CD4-positive, alpha-beta T cell (primary cell): ENCODE measurements at regions of chr17 and their contacts with region 1.

Region 1: GRCh38 chr17:45247429-45248131 is 14.3 kb downstream of the SPATA32 start:
- DNase-seq: peak; percentile 88 to 99 (median 96)
- ATAC-seq: peak; percentile 74
- H3K4me3 ChIP-seq: peak overlapping the region; percentile 75
- H3K4me3 Mint-ChIP-seq: peak overlapping the region; percentile 93
- H3K27ac ChIP-seq: peak overlapping the region; percentile 90 to 96
- H3K27ac Mint-ChIP-seq: peak overlapping the region; percentile 100
- H3K4me1 ChIP-seq: peaks cover 87% of the 10 kb centered on the region
- H3K4me1 Mint-ChIP-seq: peaks cover 68% of the 10 kb centered on the region
- H3K27me3 ChIP-seq: no peaks in the 10 kb centered on the region
- H3K27me3 Mint-ChIP-seq: no peaks in the 10 kb centered on the region
- CTCF ChIP-seq: no peak

Region 2: DNA sequence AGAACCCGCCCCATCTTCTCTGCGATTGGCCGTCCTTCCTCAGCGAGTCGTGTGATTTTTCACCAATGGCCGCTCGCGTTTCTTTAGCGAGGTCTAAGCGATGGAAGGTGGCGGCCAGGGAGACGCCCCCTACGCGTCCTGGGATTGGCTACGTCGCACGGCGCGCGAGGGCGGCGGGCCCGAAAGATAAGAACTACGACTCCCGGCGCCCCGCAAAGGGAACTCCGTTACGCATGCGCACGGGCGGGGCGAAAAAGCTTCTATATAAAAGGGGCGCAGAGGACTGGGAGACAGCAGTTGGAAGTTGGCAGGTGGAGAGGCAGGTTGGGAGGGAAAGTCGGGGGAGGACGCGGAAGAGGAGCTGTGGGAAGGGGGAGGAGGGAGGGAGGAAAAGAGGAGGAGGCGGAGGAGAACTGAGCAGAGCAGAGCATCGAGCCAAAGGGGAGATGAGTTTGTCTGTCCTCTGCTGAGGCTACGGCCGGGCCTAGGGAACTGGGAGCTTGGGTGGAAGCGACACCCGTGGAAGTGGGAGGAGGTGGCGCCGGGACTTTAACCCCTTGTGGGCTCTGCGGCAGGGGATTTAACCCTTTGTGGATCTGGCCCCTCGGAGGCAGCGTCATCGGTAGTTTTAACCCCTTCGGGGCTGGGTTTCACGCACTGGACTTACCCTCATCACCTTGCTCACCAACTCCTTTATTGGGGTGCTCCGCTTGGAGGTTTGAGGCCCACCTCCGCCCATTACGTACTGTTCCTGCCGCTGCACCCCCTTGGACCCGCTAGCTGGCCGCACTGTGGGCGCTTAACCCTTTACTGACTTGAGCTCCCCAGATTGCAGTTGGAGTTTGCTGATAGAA is 99.2 kb before region 1 on chr17 and contains the start of gene HEXIM1:
- CTCF ChIA-PET with region 1: interaction called, 3 read pairs
- POLR2A ChIA-PET with region 1: interaction called, 44 read pairs
- intact Hi-C with region 1: no loop called
- DNase-seq: peak; percentile 98 to 100 (median 99)
- ATAC-seq: peak; percentile 78
- H3K4me3 ChIP-seq: peak within 1 kb of the TSS; percentile 94
- H3K4me3 Mint-ChIP-seq: peak within 1 kb of the TSS; percentile 94
- H3K27ac ChIP-seq: peak within 1 kb of the TSS; percentile 93 to 97
- H3K27ac Mint-ChIP-seq: peak within 1 kb of the TSS; percentile 99
- H3K4me1 ChIP-seq: peaks cover 71% of the 10 kb centered on the region
- H3K4me1 Mint-ChIP-seq: peaks cover 69% of the 10 kb centered on the region
- H3K27me3 ChIP-seq: no peaks in the 10 kb centered on the region
- H3K27me3 Mint-ChIP-seq: peaks cover 8% of the 10 kb centered on the region
- CTCF ChIP-seq: no peak
- total RNA-seq, gene HEXIM1: 50.5 to 50.9 TPM

Region 3: DNA sequence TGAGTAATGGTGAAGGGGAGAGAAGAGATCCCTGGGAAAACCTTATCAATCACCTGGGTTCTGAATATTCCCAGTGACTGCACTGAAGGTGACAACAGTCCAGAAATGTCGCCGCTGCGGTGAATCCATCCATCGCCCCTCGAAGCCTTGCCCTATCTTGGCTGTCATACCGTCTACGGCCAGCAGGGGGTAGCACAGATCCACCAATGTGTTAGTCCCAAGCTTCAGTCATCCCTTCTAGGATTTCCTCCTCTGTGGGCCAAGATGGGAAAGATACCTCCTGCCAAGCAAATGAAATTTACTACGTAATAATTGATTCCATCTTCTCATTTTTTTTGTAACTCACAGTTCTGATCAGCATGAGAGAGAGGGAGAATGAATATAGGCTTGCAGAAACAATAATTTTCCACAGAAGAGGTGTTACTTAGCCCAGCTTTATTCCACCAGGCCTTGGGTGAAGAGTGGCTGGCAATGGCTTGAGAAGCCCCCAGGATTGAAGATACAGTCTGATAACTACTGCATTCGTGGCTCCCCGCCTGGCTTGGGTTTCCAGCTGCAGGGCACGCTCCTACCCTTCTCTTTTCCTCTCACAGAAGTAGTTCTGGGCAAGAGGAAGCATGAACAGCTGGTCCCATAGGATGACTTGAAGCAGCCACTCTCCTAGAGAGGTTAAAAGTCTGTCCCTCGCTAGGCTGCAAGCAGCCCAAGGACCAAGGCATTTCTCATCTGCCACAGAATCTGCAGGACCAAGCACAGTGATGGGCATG is 28.5 kb before region 1 on chr17:
- CTCF ChIA-PET with region 1: interaction called, 16 read pairs
- POLR2A ChIA-PET with region 1: interaction called, 346 read pairs
- intact Hi-C with region 1: no loop called
- DNase-seq: peak; percentile 74 to 94 (median 86)
- ATAC-seq: peak; percentile 43
- H3K4me3 ChIP-seq: peak overlapping the region; percentile 4
- H3K4me3 Mint-ChIP-seq: peak overlapping the region; percentile 91
- H3K27ac ChIP-seq: peak overlapping the region in 1 of 2 donors; percentile 17
- H3K27ac Mint-ChIP-seq: peak overlapping the region; percentile 76
- H3K4me1 ChIP-seq: peaks cover 38% of the 10 kb centered on the region
- H3K4me1 Mint-ChIP-seq: peaks cover 36% of the 10 kb centered on the region
- H3K27me3 ChIP-seq: no peaks in the 10 kb centered on the region
- H3K27me3 Mint-ChIP-seq: no peaks in the 10 kb centered on the region
- CTCF ChIP-seq: peak; percentile 99

Region 4: GRCh38 chr17:45235416-45236281 is 11.9 kb before region 1 on chr17:
- CTCF ChIA-PET with region 1: interaction called, 6 read pairs
- POLR2A ChIA-PET with region 1: interaction called, 346 read pairs
- intact Hi-C with region 1: no loop called
- DNase-seq: peak; percentile 70 to 92 (median 78)
- ATAC-seq: peak; percentile 63
- H3K4me3 ChIP-seq: no peak overlapping the region
- H3K4me3 Mint-ChIP-seq: peak overlapping the region; percentile 39
- H3K27ac ChIP-seq: peak overlapping the region; percentile 41 to 44
- H3K27ac Mint-ChIP-seq: peak overlapping the region; percentile 100
- H3K4me1 ChIP-seq: peaks cover 76% of the 10 kb centered on the region
- H3K4me1 Mint-ChIP-seq: peaks cover 65% of the 10 kb centered on the region
- H3K27me3 ChIP-seq: no peaks in the 10 kb centered on the region
- H3K27me3 Mint-ChIP-seq: no peaks in the 10 kb centered on the region
- CTCF ChIP-seq: peak; percentile 93

Region 5: GRCh38 chr17:45270828-45271418 is 23.3 kb after region 1 on chr17:
- CTCF ChIA-PET with region 1: interaction called, 3 read pairs
- POLR2A ChIA-PET with region 1: interaction called, 6 read pairs
- intact Hi-C with region 1: loop called in 1 of 2 experiments (anchors 2 kb)
- DNase-seq: peak; percentile 27 to 74 (median 51)
- ATAC-seq: peak; percentile 85
- H3K4me3 ChIP-seq: no peak overlapping the region
- H3K4me3 Mint-ChIP-seq: no peak overlapping the region
- H3K27ac ChIP-seq: no peak overlapping the region
- H3K27ac Mint-ChIP-seq: no peak overlapping the region
- H3K4me1 ChIP-seq: peaks cover 6% of the 10 kb centered on the region
- H3K4me1 Mint-ChIP-seq: no peaks in the 10 kb centered on the region
- H3K27me3 ChIP-seq: no peaks in the 10 kb centered on the region
- H3K27me3 Mint-ChIP-seq: no peaks in the 10 kb centered on the region
- CTCF ChIP-seq: peak; percentile 71

Region 6: GRCh38 chr17:45307290-45308015 is 59.9 kb after region 1 on chr17:
- CTCF ChIA-PET with region 1: interaction called, 3 read pairs
- POLR2A ChIA-PET with region 1: interaction called, 16 read pairs
- intact Hi-C with region 1: no loop called
- DNase-seq: peak in 6 of 14 experiments; percentile 18 to 66 (median 42)
- ATAC-seq: peak; percentile 72
- H3K4me3 ChIP-seq: no peak overlapping the region
- H3K4me3 Mint-ChIP-seq: peak overlapping the region; percentile 66
- H3K27ac ChIP-seq: peak overlapping the region; percentile 26 to 38
- H3K27ac Mint-ChIP-seq: peak overlapping the region; percentile 82
- H3K4me1 ChIP-seq: peaks cover 85% of the 10 kb centered on the region
- H3K4me1 Mint-ChIP-seq: peaks cover 83% of the 10 kb centered on the region
- H3K27me3 ChIP-seq: no peaks in the 10 kb centered on the region
- H3K27me3 Mint-ChIP-seq: no peaks in the 10 kb centered on the region
- CTCF ChIP-seq: no peak

Region 7: DNA sequence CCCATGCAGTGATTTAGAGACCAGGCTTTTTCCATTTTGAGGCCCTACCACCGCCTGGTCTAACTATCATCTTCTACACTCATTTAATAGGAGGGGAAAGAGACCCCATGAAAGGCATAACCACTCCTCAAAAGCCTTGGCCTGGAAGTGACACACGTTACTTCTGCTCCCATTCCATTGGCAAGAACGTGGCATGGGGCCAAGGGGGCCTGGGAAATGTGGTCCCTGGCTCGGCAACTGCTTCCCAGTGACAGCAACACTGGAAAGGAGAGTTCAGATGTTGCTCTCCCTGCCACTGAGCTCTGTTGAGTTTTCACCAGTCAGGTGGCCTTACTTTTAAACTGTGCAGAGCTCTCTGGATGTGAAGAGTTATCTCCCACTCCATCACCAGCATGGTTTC is 114.4 kb after region 1 on chr17:
- CTCF ChIA-PET with region 1: no interaction called
- POLR2A ChIA-PET with region 1: no interaction called
- intact Hi-C with region 1: no loop called
- DNase-seq: peak in 1 of 14 experiments; percentile 22
- ATAC-seq: no peak
- H3K4me3 ChIP-seq: no peak overlapping the region
- H3K4me3 Mint-ChIP-seq: no peak overlapping the region
- H3K27ac ChIP-seq: no peak overlapping the region
- H3K27ac Mint-ChIP-seq: no peak overlapping the region
- H3K4me1 ChIP-seq: no peaks in the 10 kb centered on the region
- H3K4me1 Mint-ChIP-seq: no peaks in the 10 kb centered on the region
- H3K27me3 ChIP-seq: peaks cover 3 to 6% of the 10 kb centered on the region in 2 experiments
- H3K27me3 Mint-ChIP-seq: peaks cover 29% of the 10 kb centered on the region
- CTCF ChIP-seq: no peak

Region 8: DNA sequence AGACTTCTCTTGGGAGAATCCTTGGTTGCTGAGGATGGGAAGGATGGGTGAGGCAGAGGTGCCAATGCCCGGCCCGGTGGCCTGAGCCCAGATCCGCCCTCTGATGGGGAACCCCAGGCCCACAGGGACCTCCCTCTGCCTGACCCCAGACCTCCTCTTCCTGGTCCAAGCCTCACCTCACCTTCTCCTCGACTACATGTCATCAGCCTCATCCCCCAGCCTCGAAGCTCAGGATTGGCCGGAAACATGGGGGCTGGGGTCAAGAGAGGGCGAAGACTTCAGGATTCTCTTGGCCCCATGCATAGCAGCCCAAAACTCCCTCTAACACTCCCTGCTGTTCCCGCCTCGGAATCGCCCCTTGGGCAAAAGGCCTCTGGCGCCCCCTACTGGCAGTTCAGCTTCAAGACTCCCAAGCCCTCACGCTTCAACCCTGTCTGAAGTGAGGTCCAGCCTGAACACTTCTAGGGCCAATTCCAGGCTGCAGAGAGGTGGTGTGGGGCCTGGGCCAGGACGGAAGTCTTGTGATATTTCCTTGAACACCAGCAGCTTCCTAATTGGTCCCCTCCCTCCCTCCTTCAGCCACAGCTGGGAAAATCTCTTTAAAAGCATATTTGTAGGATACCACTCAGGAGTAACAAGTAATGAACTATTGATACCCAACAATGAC is 137.9 kb after region 1 on chr17:
- CTCF ChIA-PET with region 1: interaction called, 11 read pairs
- POLR2A ChIA-PET with region 1: interaction called, 9 read pairs
- intact Hi-C with region 1: no loop called
- DNase-seq: peak; percentile 77 to 97 (median 88)
- ATAC-seq: peak; percentile 97
- H3K4me3 ChIP-seq: no peak overlapping the region
- H3K4me3 Mint-ChIP-seq: no peak overlapping the region
- H3K27ac ChIP-seq: no peak overlapping the region
- H3K27ac Mint-ChIP-seq: no peak overlapping the region
- H3K4me1 ChIP-seq: peaks cover 10% of the 10 kb centered on the region
- H3K4me1 Mint-ChIP-seq: peaks cover 4% of the 10 kb centered on the region
- H3K27me3 ChIP-seq: no peaks in the 10 kb centered on the region
- H3K27me3 Mint-ChIP-seq: peaks cover 12% of the 10 kb centered on the region
- CTCF ChIP-seq: peak; percentile 95